PC-9 (cell line): ENCODE measurements at regions of chr3 and their contacts with region 1.

Region 1: GRCh38 chr3:117026401-117026800 is 316.8 kb downstream of the TUSC7 start:
- DNase-seq: no peak
- H3K4me3 ChIP-seq: no peak overlapping the region
- H3K27ac ChIP-seq: no peak overlapping the region
- H3K4me1 ChIP-seq: no peaks in the 10 kb centered on the region
- H3K27me3 ChIP-seq: no peaks in the 10 kb centered on the region
- CTCF ChIP-seq: no peak

Region 2: GRCh38 chr3:116994351-116994879 is 32.0 kb before region 1 on chr3:
- CTCF ChIA-PET with region 1: no interaction called
- POLR2A ChIA-PET with region 1: interaction called, 12 read pairs
- intact Hi-C with region 1: no loop called
- DNase-seq: no peak
- H3K4me3 ChIP-seq: no peak overlapping the region
- H3K27ac ChIP-seq: no peak overlapping the region
- H3K4me1 ChIP-seq: no peaks in the 10 kb centered on the region
- H3K27me3 ChIP-seq: no peaks in the 10 kb centered on the region
- CTCF ChIP-seq: no peak